Activated CD4-positive, alpha-beta T cell treated with anti-CD3 and anti-CD28 coated beads for 36 hours (primary cell): ENCODE measurements at regions of chr19 and their contacts with region 1.

Region 1: DNA sequence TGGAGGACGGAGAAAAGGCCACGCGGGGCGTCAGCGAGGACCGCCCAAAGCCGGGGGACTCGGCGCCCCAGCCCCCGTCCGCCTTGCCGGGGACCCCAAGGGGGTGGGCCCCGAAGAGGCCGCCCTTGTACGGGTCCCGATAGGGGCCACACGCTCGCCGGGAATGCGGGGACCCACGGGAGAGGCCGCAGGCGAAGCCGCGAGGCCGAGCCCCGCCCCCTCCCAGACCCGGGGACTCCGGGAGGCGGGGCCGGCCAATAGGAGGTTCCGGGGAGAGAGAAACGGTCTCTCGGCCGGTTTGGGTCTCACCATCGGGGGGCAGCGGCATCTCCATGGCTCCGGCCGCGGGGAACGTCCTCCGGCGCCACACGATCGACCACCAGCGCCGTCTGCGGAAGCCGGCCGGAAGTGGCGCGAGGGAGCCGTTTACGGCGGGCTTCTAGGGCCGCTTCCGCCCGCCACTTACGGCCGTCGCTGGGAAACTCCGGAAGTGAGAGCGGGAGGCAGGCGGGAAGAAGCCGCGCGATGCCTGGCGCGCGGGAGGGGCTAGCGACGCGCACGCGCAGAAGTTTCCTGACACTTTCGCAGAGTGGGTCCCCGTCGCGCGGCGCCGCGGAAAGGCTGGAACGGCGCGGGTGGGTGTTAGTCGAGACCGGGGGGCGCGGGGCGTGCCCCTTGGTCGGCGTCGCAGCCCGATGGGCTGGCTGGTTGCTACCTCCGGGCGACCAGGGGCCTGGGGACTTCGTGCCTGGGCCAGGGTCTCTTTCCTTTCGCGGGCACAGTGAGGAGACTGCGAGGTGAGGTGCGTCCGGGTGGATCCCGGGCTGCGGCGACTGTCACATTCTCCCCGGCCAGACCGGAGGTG is at the start of gene CHERP:
- DNase-seq: peak; percentile 97
- ATAC-seq: peak; percentile 85
- H3K4me3 Mint-ChIP-seq: peak within 1 kb of the TSS; percentile 98
- H3K27ac Mint-ChIP-seq: peak within 1 kb of the TSS; percentile 94
- H3K4me1 Mint-ChIP-seq: peaks cover 63% of the 10 kb centered on the region
- H3K27me3 Mint-ChIP-seq: no peaks in the 10 kb centered on the region
- total RNA-seq, gene CHERP: 57.9 to 64.8 TPM

Region 2: GRCh38 chr19:16197622-16198369 is 344.5 kb before region 1 on chr19 and contains the start of gene AP1M1:
- CTCF ChIA-PET with region 1: no interaction called
- POLR2A ChIA-PET with region 1: no interaction called
- intact Hi-C with region 1: loop called in 1 of 2 experiments (anchors 5 kb)
- DNase-seq: peak; percentile 99
- ATAC-seq: peak; percentile 95
- H3K4me3 Mint-ChIP-seq: peak within 1 kb of the TSS; percentile 83
- H3K27ac Mint-ChIP-seq: peak within 1 kb of the TSS; percentile 96
- H3K4me1 Mint-ChIP-seq: peaks cover 33% of the 10 kb centered on the region
- H3K27me3 Mint-ChIP-seq: no peaks in the 10 kb centered on the region
- total RNA-seq, gene AP1M1: 61.8 to 92.0 TPM

Region 3: DNA sequence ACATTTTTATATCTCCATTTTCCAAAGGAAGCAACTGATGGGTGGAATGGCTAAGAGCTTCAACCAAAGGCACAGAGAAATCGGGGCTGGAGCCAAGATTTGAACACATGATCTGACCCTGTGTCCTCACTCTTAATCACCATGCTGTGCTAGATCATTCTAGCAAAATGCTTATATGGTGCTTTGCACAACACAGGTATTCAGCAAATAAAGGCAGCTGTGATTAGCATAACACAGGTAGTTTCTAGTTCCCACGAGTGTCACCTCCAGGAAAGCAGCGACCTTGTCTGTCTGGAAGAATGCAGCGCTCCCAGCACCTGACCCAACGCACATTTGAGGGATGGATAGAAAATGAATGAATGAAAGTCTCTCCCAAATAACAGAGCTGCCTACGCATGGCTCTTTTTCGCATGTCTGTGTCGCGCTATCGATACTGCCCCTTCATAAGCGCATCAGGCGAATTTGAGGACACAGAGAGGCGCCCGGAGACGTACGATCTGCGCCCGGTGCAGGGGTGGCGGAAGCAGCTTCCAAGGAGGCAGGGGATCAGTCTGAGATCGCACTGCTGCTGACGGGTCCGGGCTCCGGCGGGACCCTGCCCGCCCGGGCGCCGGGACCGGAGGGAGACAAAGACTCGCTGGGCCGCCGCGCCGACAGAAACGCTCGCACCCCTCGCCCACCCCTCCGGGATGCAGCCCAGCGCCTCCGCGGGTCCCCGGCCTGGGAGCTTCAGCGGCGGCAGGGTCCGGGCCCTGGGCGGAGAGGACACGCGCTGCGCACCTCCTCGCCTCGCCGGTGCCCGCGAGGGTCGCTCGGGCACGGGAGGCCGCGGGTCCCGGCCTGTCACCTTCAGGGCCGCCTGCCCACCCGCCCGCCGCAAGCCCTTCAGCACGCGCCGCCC is 71.1 kb before region 1 on chr19:
- CTCF ChIA-PET with region 1: no interaction called
- POLR2A ChIA-PET with region 1: no interaction called
- intact Hi-C with region 1: loop called in 1 of 2 experiments (anchors 1 kb)
- DNase-seq: peak; percentile 60
- ATAC-seq: peak; percentile 20
- H3K4me3 Mint-ChIP-seq: peak overlapping the region; percentile 85
- H3K27ac Mint-ChIP-seq: peak overlapping the region; percentile 72
- H3K4me1 Mint-ChIP-seq: peaks cover 37% of the 10 kb centered on the region
- H3K27me3 Mint-ChIP-seq: peaks cover 2% of the 10 kb centered on the region

Region 4: GRCh38 chr19:16495982-16496612 is 46.2 kb before region 1 on chr19 and contains the starts of genes C19orf44 and CALR3:
- CTCF ChIA-PET with region 1: no interaction called
- POLR2A ChIA-PET with region 1: no interaction called
- intact Hi-C with region 1: loop called (anchors 1 kb)
- DNase-seq: peak; percentile 99
- ATAC-seq: peak; percentile 99
- H3K4me3 Mint-ChIP-seq: peak within 1 kb of the TSS; percentile 89
- H3K27ac Mint-ChIP-seq: peak within 1 kb of the TSS; percentile 79
- H3K4me1 Mint-ChIP-seq: peaks cover 13% of the 10 kb centered on the region
- H3K27me3 Mint-ChIP-seq: no peaks in the 10 kb centered on the region
- total RNA-seq, gene C19orf44: 2.9 to 4.0 TPM
- total RNA-seq, gene CALR3: not detected

Region 5: DNA sequence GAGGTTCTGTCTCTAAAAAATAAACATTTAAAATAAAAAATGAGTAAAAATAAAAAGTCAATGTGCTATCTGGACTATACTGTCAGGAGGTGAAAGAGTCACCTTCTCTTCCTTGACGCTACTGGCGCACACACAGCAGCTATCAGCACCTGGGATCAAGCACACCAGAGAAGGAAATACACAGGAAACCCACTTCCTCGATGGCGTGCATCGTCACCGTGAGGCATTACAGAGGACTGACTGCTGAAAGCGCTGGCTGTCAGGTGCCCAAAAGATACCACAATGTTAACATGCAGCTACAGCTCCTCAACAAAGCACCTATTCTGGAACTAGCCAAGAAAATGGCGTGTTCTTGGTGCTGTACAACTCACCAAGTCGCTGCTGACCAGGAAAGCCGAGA is 23.9 kb after region 1 on chr19:
- CTCF ChIA-PET with region 1: no interaction called
- POLR2A ChIA-PET with region 1: no interaction called
- intact Hi-C with region 1: no loop called
- DNase-seq: peak; percentile 79
- ATAC-seq: peak; percentile 98
- H3K4me3 Mint-ChIP-seq: no peak overlapping the region
- H3K27ac Mint-ChIP-seq: peak overlapping the region; percentile 91
- H3K4me1 Mint-ChIP-seq: peaks cover 37% of the 10 kb centered on the region
- H3K27me3 Mint-ChIP-seq: no peaks in the 10 kb centered on the region

Region 6: GRCh38 chr19:16584248-16585141 is 42.2 kb after region 1 on chr19:
- CTCF ChIA-PET with region 1: no interaction called
- POLR2A ChIA-PET with region 1: interaction called, 9 read pairs
- intact Hi-C with region 1: loop called (anchors 1 kb)
- DNase-seq: peak; percentile 94
- ATAC-seq: peak; percentile 79
- H3K4me3 Mint-ChIP-seq: peak overlapping the region; percentile 79
- H3K27ac Mint-ChIP-seq: peak overlapping the region; percentile 95
- H3K4me1 Mint-ChIP-seq: peaks cover 76% of the 10 kb centered on the region
- H3K27me3 Mint-ChIP-seq: no peaks in the 10 kb centered on the region

Region 7: DNA sequence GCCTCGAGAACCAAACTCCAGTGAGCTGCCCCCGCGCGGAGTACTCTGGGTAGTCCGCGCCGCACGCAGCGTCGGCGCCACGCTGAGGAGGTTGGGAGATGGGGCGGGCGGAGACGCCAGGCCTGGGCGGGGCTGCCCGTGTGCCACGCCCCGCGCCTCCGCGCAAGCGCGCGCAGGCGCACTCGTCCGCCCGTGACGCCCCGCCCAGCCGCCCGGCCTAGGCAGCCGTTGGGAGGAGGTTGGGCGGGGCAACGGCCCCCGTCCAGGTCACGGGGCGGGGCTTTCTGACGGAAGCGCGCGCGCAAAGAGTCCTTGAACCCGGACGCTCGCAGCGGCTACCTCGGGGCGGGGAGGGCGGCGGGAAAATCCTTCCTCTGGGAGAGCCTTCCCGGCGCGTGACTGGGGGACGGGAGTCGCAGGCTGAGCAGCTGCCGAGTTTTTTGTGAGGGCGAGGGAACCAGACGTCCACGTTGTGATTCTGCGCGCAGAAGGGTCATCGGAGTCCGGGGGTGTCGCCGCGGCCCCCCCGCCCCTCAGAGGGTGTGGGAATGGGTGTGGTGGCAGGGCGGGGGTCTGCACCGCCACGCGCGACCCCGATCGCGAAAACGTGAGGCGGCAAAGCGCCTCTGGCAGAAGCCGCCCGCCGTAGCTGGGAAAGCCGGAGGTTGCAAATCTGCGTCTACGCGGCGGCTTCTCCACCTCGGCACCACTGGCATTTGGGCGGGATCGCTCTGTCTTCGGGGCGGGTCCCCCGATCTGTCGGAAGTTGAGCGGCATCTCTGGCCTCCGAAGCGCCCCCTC is 86.1 kb after region 1 on chr19 and contains the start of gene MED26:
- CTCF ChIA-PET with region 1: no interaction called
- POLR2A ChIA-PET with region 1: interaction called, 5 read pairs
- intact Hi-C with region 1: loop called (anchors 1 to 2 kb)
- DNase-seq: peak; percentile 98
- ATAC-seq: peak; percentile 92
- H3K4me3 Mint-ChIP-seq: peak within 1 kb of the TSS; percentile 87
- H3K27ac Mint-ChIP-seq: peak within 1 kb of the TSS; percentile 100
- H3K4me1 Mint-ChIP-seq: peaks cover 39% of the 10 kb centered on the region
- H3K27me3 Mint-ChIP-seq: no peaks in the 10 kb centered on the region
- total RNA-seq, gene MED26: 13.6 to 14.5 TPM

Region 8: DNA sequence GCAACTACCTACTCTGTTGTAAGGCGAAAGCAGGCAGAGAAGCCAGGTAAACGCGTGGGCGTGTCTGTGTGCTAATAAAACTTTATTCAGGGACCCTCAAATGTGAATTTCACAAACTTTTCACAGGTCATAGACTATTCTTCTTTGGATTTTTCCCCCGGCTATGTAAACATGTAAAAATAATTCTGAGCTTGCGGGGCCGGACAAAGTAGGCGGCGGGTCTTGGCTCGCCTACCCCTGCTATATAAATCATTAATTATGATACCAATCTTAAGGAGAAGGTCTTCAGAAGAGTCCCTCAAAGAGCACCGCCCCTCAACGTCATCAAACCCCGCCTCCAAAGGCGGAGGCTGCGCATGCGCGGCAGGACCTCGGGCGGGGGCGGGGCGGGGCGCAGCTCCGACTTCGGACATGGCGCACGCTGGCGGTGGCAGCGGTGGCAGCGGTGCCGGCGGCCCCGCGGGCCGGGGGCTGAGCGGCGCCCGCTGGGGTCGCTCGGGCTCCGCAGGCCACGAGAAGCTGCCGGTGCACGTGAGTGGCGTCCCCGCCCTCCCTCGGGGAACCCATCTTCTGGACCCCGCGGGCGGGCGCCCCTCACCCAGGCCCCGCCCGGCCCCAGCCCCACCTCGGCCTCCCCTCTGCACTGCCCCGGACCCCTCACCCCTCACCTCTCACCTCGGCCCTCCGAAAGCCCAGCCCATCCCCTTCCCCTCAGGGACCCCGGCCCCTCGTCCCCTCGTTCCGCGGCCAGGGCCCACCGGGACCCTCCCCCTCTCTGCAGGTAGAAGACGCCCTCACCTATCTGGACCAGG is 286.9 kb after region 1 on chr19 and contains the start of gene SIN3B:
- CTCF ChIA-PET with region 1: no interaction called
- POLR2A ChIA-PET with region 1: no interaction called
- intact Hi-C with region 1: loop called in 1 of 2 experiments (anchors 1 kb)
- DNase-seq: peak; percentile 93
- ATAC-seq: peak; percentile 91
- H3K4me3 Mint-ChIP-seq: peak within 1 kb of the TSS; percentile 79
- H3K27ac Mint-ChIP-seq: peak within 1 kb of the TSS; percentile 82
- H3K4me1 Mint-ChIP-seq: peaks cover 38% of the 10 kb centered on the region
- H3K27me3 Mint-ChIP-seq: peaks cover 20% of the 10 kb centered on the region
- total RNA-seq, gene SIN3B: 27.6 to 28.5 TPM